ENCODE measurements at regions of chr5 and their contacts with region 1.

Region 1: GRCh38 chr5:150656191-150657132 is 4.6 kb upstream of the MYOZ3 start:
- DNase-seq: no peak
- H3K4me3 ChIP-seq: peak overlapping the region; percentile 57 to 72
- H3K27ac ChIP-seq: peak overlapping the region; percentile 85
- H3K4me1 ChIP-seq: peaks cover 33% of the 10 kb centered on the region
- H3K27me3 ChIP-seq: no peaks in the 10 kb centered on the region
- CTCF ChIP-seq: peak in 2 of 3 experiments; percentile 60 to 82
- POLR2A ChIP-seq: no peak

Region 2: DNA sequence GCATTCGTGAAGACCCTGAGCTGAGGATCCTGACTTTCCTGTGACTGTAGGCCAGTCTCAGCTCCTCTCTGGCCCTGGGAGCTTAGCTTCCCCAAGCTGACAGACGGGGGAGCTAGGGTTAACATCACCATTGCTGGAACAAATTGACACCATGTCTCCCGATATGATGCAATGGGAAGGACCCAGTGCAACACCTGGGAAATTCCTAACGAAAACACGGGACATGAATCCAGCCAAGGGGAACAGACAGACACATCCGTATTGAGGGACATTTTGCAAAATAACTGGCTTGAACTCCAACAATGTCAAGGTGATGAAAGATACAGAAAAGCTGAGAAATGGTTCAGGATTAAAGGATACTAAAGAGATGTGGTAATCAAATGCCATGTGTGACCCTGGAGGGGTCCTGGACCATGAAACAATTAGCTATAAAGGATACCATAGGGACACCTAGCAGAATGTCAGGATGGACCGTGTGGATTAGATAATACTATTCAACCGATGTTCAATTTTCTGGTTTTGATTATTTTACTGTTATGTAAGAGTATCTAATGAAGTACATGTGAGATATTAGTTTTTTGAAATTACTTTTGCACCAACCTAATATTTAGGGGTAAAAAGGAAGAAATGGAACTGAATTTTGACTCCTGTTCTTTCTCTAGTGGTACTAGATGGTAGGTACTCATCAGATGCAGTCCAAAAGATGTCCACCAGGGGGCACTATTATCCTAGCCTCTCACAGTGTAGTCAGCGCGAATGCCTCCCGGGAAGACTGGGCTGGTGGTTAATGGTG is 95.9 kb before region 1 on chr5:
- intact Hi-C with region 1: loop called (anchors 5 kb)
- DNase-seq: no peak
- H3K4me3 ChIP-seq: no peak overlapping the region
- H3K27ac ChIP-seq: no peak overlapping the region
- H3K4me1 ChIP-seq: no peaks in the 10 kb centered on the region
- H3K27me3 ChIP-seq: no peaks in the 10 kb centered on the region
- CTCF ChIP-seq: peak; percentile 90 to 94 (median 90)
- POLR2A ChIP-seq: peak in 1 of 2 donors; percentile 9

Region 3: DNA sequence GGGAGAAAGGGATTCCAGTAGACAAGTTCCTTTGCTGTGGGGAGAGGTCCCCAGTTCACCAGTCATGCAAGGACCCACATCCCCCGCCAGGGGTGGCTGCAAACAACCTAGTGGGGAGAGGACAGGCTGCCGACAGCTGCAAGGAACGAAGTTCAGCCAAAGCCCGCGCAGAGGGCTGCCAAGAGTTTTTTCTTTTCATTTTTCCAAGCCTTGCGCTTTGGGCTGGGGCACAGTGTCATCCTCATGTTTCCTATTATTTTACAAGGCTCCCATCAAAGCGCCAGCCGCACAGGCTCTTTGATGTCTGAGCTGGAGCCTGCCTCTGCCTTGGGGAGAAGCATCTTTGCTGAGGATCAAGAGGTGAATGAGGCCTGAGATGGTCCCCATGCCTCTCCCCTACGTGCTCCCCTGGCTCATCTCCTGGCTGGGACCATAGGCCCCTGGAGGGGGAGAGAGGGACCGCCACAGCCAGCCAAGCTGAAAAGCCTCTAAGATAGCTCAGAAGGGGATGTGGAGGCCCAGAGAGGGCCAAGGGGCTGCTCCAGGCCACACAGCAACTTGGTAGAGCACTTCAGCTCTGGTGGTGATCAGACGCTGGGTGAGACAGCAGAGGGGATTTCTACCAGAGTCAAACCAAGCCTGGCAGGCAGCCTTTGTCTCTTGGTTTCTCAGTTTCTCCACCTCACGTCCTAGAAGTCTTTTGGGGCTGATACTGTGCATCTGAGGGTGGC is 66.4 kb before region 1 on chr5:
- intact Hi-C with region 1: loop called (anchors 2 kb)
- DNase-seq: no peak
- H3K4me3 ChIP-seq: no peak overlapping the region
- H3K27ac ChIP-seq: peak overlapping the region; percentile 64
- H3K4me1 ChIP-seq: peaks cover 34% of the 10 kb centered on the region
- H3K27me3 ChIP-seq: no peaks in the 10 kb centered on the region
- CTCF ChIP-seq: peak; percentile 27 to 78 (median 67)
- POLR2A ChIP-seq: no peak

Measured in vagina (tissue), 2 donors.